Ascending aorta (tissue), 2 donors: ENCODE measurements at regions of chr22 and their contacts with region 1.

Region 1: GRCh38 chr22:29343313-29343805 is 27.9 kb upstream of the RASL10A start:
- DNase-seq: no peak
- H3K4me3 ChIP-seq: no peak overlapping the region
- H3K27ac ChIP-seq: no peak overlapping the region
- H3K4me1 ChIP-seq: peaks cover 0 to 5% of the 10 kb centered on the region in 2 donors
- H3K27me3 ChIP-seq: no peaks in the 10 kb centered on the region
- CTCF ChIP-seq: no peak

Region 2: GRCh38 chr22:29315286-29316131 is 27.9 kb before region 1 on chr22 and contains the start of gene RASL10A:
- intact Hi-C with region 1: loop called (anchors 2 kb)
- DNase-seq: no peak
- H3K4me3 ChIP-seq: peak within 1 kb of the TSS; percentile 55 to 59
- H3K27ac ChIP-seq: no peak within 1 kb of the TSS
- H3K4me1 ChIP-seq: peaks cover 12 to 31% of the 10 kb centered on the region in 2 donors
- H3K27me3 ChIP-seq: peaks cover 13% of the 10 kb centered on the region
- CTCF ChIP-seq: no peak
- total RNA-seq, gene RASL10A: not detected